Activated CD4-positive, alpha-beta T cell treated with anti-CD3 and anti-CD28 coated beads for 36 hours (primary cell): ENCODE measurements at regions of chr1 and their contacts with region 1.

Region 1: GRCh38 chr1:25796811-25797458 is 3.1 kb upstream of the SELENON start:
- DNase-seq: peak; percentile 93
- ATAC-seq: peak; percentile 61
- H3K4me3 Mint-ChIP-seq: peak overlapping the region; percentile 56
- H3K27ac Mint-ChIP-seq: peak overlapping the region; percentile 95
- H3K4me1 Mint-ChIP-seq: peaks cover 62% of the 10 kb centered on the region
- H3K27me3 Mint-ChIP-seq: no peaks in the 10 kb centered on the region

Region 2: DNA sequence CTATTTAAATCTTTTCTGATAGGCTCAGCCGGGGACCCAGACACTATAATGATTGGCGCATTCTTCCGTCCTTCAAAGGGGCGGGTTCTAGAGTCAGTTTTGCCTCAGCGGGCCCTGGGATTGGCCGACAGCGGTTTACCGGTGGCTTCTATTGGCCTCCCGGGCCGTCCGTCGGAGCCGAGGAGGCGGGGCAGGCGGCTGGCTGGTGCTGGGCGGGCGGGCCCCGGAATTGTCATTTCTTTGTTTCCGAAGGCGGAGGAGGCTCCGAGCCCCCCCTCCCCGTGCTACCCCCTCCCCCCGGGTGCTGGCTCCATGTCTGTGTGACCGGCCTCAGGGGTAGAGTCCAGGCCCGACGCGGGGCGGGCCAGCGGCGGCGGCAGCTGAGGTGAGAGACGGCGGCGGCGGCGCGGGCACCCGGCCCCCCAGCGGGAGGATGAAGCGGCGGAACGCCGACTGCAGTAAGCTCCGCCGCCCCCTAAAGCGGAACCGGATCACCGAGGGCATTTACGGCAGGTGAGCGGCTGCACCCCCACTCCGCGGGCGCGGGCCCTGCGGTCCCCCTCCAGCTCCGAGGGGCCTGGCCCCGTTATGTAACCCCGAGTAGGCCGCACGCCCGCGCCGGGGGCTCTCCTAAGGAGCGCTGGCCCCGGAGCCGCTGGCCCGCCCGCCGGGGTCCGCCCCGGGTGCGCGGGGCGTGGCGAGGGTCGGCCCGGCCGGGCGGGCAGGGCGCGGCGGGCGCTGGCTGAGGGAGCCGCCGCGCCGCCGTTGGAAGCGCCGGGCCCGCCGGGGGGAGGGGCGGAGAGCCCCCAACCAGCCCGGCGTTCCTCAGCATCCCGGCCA is 366.0 kb before region 1 on chr1 and contains the start of gene MACO1:
- CTCF ChIA-PET with region 1: no interaction called
- POLR2A ChIA-PET with region 1: no interaction called
- intact Hi-C with region 1: loop called in 1 of 2 experiments (anchors 5 kb)
- DNase-seq: peak; percentile 98
- ATAC-seq: peak; percentile 93
- H3K4me3 Mint-ChIP-seq: peak within 1 kb of the TSS; percentile 93
- H3K27ac Mint-ChIP-seq: peak within 1 kb of the TSS; percentile 99
- H3K4me1 Mint-ChIP-seq: peaks cover 47% of the 10 kb centered on the region
- H3K27me3 Mint-ChIP-seq: no peaks in the 10 kb centered on the region
- total RNA-seq, gene MACO1: 15.7 to 18.5 TPM

Region 3: DNA sequence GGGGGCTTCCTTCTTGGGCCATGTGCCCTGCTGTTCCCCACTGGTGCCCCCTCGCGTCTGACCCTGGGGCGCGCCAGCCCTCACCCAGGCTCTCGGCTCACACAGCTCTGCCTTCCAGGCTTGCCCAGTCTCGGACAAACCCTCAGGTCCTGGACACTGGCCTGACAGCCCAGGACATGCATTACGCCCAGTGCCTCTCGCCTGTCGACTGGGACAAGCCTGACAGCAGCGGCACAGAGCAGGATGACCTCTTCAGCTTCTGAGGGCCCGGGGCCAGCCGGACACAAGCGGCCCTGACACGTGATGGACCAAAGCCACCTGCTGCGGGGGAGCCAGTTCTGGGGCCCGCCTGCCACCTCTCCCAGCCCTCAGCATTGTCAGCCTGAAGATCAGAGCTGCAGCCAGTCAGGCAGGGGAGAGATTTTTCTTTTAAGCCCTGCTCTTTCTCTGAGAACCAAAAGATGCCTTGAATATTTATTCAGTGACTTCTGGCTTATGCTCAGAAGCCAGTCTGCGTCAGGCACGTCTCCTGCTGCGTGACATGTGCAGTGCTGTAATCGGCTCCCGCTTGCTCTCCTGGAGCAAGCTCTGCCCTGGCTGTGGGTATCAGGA is 230.1 kb before region 1 on chr1:
- CTCF ChIA-PET with region 1: interaction called, 3 read pairs
- POLR2A ChIA-PET with region 1: no interaction called
- intact Hi-C with region 1: loop called in 1 of 2 experiments (anchors 2 kb)
- DNase-seq: peak; percentile 68
- ATAC-seq: peak; percentile 18
- H3K4me3 Mint-ChIP-seq: peak overlapping the region; percentile 9
- H3K27ac Mint-ChIP-seq: peak overlapping the region; percentile 69
- H3K4me1 Mint-ChIP-seq: peaks cover 82% of the 10 kb centered on the region
- H3K27me3 Mint-ChIP-seq: no peaks in the 10 kb centered on the region

Region 4: DNA sequence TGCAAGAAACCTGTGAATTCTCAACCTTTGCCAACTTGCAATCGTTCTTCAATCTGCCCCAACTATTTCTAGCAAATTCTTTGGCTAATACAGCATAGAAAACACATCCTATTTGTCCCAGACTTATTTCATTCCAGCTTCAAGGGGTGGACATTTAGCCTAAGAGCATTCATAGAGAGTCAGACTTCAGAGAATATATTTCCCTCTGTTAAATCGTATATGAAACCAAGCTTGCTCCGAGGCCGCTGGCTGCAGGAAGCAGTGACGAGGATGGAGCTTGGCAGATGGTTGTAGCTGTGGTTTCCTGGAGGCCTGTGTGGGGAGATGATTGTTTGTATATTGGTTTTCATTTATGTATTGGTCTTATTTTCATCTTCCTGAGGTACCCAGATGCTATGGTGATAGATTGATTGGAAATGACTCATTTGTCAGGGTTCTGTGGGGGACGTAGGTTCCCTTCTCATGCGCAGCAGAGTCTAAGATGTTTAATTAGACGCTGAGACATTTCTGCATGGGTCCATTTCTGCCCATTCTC is 154.3 kb before region 1 on chr1:
- CTCF ChIA-PET with region 1: interaction called, 4 read pairs
- POLR2A ChIA-PET with region 1: interaction called, 3 read pairs
- intact Hi-C with region 1: loop called in 1 of 2 experiments (anchors 1 kb)
- DNase-seq: peak; percentile 85
- ATAC-seq: peak; percentile 90
- H3K4me3 Mint-ChIP-seq: peak overlapping the region; percentile 69
- H3K27ac Mint-ChIP-seq: peak overlapping the region; percentile 85
- H3K4me1 Mint-ChIP-seq: peaks cover 80% of the 10 kb centered on the region
- H3K27me3 Mint-ChIP-seq: no peaks in the 10 kb centered on the region

Region 5: GRCh38 chr1:25727635-25728330 is 69.2 kb before region 1 on chr1:
- CTCF ChIA-PET with region 1: interaction called, 4 read pairs
- POLR2A ChIA-PET with region 1: no interaction called
- intact Hi-C with region 1: loop called in 1 of 2 experiments (anchors 2 kb)
- DNase-seq: no peak
- ATAC-seq: peak; percentile 3
- H3K4me3 Mint-ChIP-seq: no peak overlapping the region
- H3K27ac Mint-ChIP-seq: peak overlapping the region; percentile 32
- H3K4me1 Mint-ChIP-seq: peaks cover 73% of the 10 kb centered on the region
- H3K27me3 Mint-ChIP-seq: no peaks in the 10 kb centered on the region